Mammary epithelial cell (primary cell): ENCODE measurements at regions of chr11 and their contacts with region 1.

Region 1: GRCh38 chr11:62694455-62695167 is 5.3 kb upstream of the LRRN4CL start:
- DNase-seq: peak; percentile 52
- H3K4me3 ChIP-seq: no peak overlapping the region
- H3K27ac ChIP-seq: no peak overlapping the region
- H3K4me1 ChIP-seq: no peaks in the 10 kb centered on the region
- H3K27me3 ChIP-seq: no peaks in the 10 kb centered on the region
- CTCF ChIP-seq: peak; percentile 79 to 87

Region 2: DNA sequence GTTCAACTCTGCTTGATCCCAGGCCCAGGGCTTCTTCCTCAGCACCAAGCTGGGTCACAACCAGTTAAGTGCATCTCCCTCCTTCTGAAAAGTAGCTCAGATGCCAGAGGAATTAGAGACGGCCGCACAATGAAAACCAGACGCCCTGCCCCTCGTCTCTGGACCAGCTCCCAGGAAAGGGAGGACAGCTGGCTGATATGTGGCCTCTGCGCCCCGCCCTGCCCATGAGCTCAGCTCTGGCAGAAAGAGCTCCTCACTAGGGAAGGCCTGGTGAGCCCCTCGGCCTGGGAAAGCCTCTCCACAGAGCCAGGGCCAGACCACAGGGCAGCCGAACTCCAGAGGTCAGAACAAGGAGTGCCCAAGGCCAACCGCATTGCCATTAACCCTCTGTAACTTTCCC is 293.9 kb before region 1 on chr11:
- CTCF ChIA-PET with region 1: no interaction called
- dilution Hi-C with region 1: no loop called
- in situ Hi-C with region 1: loop called (anchors 10 kb)
- intact Hi-C with region 1: loop called (anchors 1 kb)
- DNase-seq: no peak
- H3K4me3 ChIP-seq: no peak overlapping the region
- H3K27ac ChIP-seq: no peak overlapping the region
- H3K4me1 ChIP-seq: peaks cover 5% of the 10 kb centered on the region
- H3K27me3 ChIP-seq: no peaks in the 10 kb centered on the region
- CTCF ChIP-seq: no peak